Right ventricle myocardium superior (tissue), 1 donor: ENCODE measurements at regions of chr12 and their contacts with region 1.

Region 1: DNA sequence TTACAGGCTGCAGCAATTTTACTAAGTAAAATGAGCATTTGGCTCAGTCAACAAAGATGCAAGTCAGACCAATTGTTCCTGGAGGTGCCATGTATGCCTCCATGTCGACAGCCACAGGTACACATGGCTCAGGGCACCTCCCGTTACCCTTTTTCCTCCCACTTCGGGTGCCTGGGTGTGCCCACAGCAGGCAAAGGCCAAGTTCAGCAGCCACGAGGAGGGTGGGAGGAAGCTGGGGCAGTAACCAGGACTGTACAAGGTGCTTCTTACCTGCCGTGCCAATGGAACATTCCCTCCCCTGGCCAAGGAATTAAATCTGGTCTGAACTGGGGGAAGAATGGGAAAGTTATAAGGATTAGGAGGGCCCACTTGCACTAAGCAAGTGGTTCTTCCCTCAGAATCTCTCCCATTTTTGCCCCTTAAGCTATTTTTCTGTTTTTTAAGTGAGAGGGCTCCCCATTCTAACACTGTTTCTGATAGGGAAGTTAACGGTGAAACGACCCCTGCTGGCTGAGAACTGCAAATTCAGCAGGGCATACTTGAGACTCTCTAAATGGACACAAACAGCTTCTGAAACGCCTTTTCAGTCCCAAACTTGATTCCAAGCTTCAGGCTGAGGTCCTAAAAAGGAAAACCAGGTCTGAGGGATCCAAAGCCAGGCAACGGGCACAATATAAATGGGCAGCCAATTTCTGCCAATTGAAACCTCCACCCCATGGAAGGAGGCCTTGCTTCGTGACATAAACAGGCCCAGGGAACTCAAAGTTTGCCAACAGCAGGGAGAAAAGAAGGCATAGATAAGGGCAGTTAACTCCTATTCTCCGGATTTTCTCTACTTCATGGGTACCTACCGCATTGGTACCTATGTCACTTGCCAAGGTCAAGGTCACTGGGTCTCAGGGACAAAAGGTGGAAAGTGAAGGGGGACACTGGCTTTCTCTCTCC is 24.8 kb downstream of the CLECL1 start:
- DNase-seq: peak; percentile 54
- ATAC-seq: peak; percentile 82

Region 2: GRCh38 chr12:9634177-9634803 is 73.8 kb before region 1 on chr12:
- intact Hi-C with region 1: loop called (anchors 5 kb)
- DNase-seq: no peak
- ATAC-seq: peak; percentile 48